HepG2 (cell line): ENCODE measurements at regions of chrX and their contacts with region 1.

Region 1: DNA sequence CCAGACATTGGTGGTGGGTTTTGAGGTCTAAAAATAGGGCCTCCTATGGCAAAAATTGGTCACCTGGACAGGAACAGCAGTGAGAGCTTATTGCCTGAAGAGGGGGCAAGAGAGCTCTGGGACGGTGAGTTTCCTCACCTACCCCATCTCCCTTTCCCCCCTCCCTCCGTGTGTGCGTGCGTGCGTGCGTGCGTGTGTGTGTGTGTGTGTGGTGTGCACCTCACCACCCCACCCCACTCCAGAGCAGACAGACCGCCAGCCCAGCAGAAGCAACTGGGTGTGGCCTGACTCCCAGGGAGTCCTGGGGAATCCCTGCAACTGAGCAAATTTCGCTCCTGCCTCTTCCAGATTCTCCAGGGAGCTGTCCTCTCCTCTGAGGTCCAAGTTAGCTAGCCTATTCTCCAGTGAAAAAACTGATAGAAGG is 44.7 kb downstream of the PRPS1 start:
- DNase-seq: peak; percentile 28
- ATAC-seq: peak; percentile 76
- H3K4me3 ChIP-seq: no peak overlapping the region
- H3K27ac ChIP-seq: no peak overlapping the region
- H3K4me1 ChIP-seq: no peaks in the 10 kb centered on the region
- H3K27me3 ChIP-seq: peaks cover 0 to 3% of the 10 kb centered on the region in 2 experiments; a peak in 2 of 5 replicates
- CTCF ChIP-seq: peak; percentile 69
- EP300 ChIP-seq: no peak
- POLR2A ChIP-seq: no peak
- RAD21 ChIP-seq: peak; percentile 49; the same call in 1 of the 2 replicates

Region 2: GRCh38 chrX:107716816-107717700 is 44.1 kb after region 1 on chrX:
- CTCF ChIA-PET with region 1: no interaction called
- POLR2A ChIA-PET with region 1: no interaction called
- in situ Hi-C with region 1: no loop called
- intact Hi-C with region 1: loop called (anchors 5 kb)
- DNase-seq: no peak
- ATAC-seq: peak; percentile 59
- H3K4me3 ChIP-seq: peak overlapping the region; percentile 45 to 62 (median 47); a peak in 4 of 6 replicates
- H3K27ac ChIP-seq: no peak overlapping the region
- H3K4me1 ChIP-seq: peaks cover 14% of the 10 kb centered on the region
- H3K27me3 ChIP-seq: peaks cover 0 to 12% of the 10 kb centered on the region in 2 experiments; a peak in 1 of 5 replicates
- CTCF ChIP-seq: no peak
- EP300 ChIP-seq: no peak
- POLR2A ChIP-seq: peak in 1 of 2 experiments; percentile 44; a peak in 1 of 4 replicates
- RAD21 ChIP-seq: no peak

Region 3: DNA sequence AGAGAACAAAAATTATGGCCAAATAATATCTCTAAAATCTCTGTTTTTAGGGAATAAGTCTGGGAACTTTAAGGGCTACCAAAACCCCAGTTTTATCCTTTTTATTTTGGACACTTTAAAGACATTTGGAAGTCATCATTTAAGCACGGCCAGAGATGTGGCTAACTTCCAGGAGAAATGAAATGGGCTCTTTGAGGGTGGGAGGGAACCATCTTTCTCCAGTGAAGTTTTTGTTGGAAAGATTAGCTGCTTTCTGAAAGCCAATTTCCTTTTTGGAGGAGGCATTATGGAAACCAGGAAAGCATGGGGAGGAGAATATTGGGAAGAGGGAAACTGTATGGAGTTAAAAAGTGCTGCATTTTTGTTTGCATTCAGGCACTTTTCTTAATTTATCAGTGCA is 376.7 kb after region 1 on chrX:
- CTCF ChIA-PET with region 1: no interaction called
- POLR2A ChIA-PET with region 1: no interaction called
- in situ Hi-C with region 1: no loop called
- intact Hi-C with region 1: no loop called
- DNase-seq: no peak
- ATAC-seq: no peak
- H3K4me3 ChIP-seq: no peak overlapping the region
- H3K27ac ChIP-seq: no peak overlapping the region
- H3K4me1 ChIP-seq: no peaks in the 10 kb centered on the region
- H3K27me3 ChIP-seq: no peaks in the 10 kb centered on the region
- CTCF ChIP-seq: no peak
- EP300 ChIP-seq: no peak
- POLR2A ChIP-seq: no peak
- RAD21 ChIP-seq: no peak